Activated CD8-positive, alpha-beta memory T cell treated with anti-CD3 and anti-CD28 coated beads, Interleukin-2, amount 10 ng/mL, durations not matched to agents 7 days and 5 days (primary cell): ENCODE measurements at regions of chr10 and their contacts with region 1.

Region 1: GRCh38 chr10:79347226-79347893 is at the start of gene PPIF:
- DNase-seq: peak; percentile 95
- ATAC-seq: peak; percentile 90
- H3K4me3 Mint-ChIP-seq: peak within 1 kb of the TSS; percentile 85
- H3K27ac Mint-ChIP-seq: peak within 1 kb of the TSS; percentile 89
- H3K4me1 Mint-ChIP-seq: peaks cover 78% of the 10 kb centered on the region
- H3K27me3 Mint-ChIP-seq: no peaks in the 10 kb centered on the region
- total RNA-seq, gene PPIF: 119 to 144 TPM

Region 2: GRCh38 chr10:79223091-79224048 is 124.0 kb before region 1 on chr10:
- CTCF ChIA-PET with region 1: no interaction called
- DNase-seq: no peak
- ATAC-seq: no peak
- H3K4me3 Mint-ChIP-seq: no peak overlapping the region
- H3K27ac Mint-ChIP-seq: no peak overlapping the region
- H3K4me1 Mint-ChIP-seq: no peaks in the 10 kb centered on the region
- H3K27me3 Mint-ChIP-seq: no peaks in the 10 kb centered on the region

Region 3: DNA sequence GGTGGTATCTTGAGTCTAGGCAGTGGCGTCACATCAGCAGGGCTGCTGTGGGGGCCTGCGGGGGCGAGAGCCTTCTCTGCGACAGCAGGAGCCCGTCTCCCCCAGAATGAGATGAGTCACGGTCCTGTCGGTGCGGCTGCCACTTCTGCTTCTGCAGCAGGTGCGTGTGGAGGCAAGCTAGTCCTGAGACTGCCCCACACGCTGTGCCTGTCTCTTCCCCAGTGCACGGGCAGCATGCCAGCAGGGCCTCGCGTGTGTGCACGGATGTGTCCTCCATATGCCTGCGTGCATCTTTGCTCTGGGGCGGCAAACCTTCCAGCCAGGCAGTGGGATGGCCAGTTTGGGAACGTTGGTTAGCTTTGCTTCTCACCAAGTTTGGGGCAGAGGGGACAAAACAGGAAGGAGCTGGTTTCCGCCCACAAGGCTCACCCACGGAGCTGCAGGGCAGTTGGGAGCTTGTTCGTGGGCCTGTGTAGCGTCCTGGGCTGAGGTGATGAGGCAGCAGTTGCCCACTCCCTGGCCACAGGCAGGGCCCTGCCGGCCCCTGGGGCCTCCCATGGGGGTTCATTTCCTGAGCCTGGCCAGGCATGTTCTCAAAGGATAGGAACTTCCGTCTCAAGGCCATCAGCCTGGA is 60.9 kb before region 1 on chr10:
- CTCF ChIA-PET with region 1: interaction called, 18 read pairs
- DNase-seq: peak; percentile 96
- ATAC-seq: peak; percentile 89
- H3K4me3 Mint-ChIP-seq: peak overlapping the region; percentile 66
- H3K27ac Mint-ChIP-seq: peak overlapping the region; percentile 95
- H3K4me1 Mint-ChIP-seq: peaks cover 69% of the 10 kb centered on the region
- H3K27me3 Mint-ChIP-seq: no peaks in the 10 kb centered on the region

Region 4: GRCh38 chr10:79292891-79293746 is 54.2 kb before region 1 on chr10:
- CTCF ChIA-PET with region 1: interaction called, 18 read pairs
- DNase-seq: peak; percentile 55
- ATAC-seq: peak; percentile 63
- H3K4me3 Mint-ChIP-seq: no peak overlapping the region
- H3K27ac Mint-ChIP-seq: peak overlapping the region; percentile 20
- H3K4me1 Mint-ChIP-seq: peaks cover 47% of the 10 kb centered on the region
- H3K27me3 Mint-ChIP-seq: no peaks in the 10 kb centered on the region

Region 5: DNA sequence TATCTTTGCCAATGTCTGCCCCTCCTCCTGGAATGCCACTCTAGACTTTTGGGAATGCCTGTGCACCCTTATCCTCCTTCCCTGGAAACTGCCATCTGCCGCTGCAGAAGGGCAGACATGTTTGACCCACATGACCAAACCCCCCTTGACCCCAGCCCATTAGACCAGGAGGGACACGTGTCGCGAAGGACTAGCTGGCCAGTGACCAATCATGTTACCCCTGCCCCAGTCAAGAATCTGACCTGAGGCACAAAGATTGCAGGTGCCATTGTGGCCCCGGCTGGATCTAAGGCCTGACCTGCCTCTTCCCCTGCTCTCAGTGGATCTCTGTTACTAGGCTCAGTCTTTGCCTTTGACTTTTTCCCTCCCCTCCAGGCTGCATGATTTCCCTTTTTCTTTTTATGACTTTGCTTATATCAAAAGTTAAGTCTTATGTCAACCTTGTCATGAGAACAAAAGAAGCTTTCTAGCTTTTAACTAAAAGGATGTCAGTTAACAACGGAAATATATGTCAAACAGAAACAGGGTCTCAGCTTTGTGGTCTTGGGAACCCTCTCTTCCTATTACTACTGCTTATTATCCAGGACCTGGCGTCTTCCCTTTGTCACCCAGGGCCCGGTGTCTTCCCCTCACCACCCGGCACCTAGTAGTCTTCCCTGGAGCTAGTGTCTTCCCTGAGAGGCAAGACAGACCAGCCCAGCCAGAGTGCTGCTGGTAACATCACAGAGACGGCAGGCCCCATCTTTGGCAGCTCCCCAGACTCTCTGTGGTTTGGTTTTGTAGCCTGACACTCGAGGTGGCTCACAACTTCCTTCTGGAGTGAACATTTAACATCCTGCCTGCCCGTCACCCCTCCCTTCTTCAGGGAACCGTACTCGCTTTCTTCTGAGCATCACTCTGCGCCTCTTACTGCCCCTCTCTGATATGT is 24.5 kb before region 1 on chr10:
- CTCF ChIA-PET with region 1: interaction called, 171 read pairs
- DNase-seq: peak; percentile 91
- ATAC-seq: peak; percentile 81
- H3K4me3 Mint-ChIP-seq: peak overlapping the region; percentile 59
- H3K27ac Mint-ChIP-seq: peak overlapping the region; percentile 97
- H3K4me1 Mint-ChIP-seq: peaks cover 72% of the 10 kb centered on the region
- H3K27me3 Mint-ChIP-seq: no peaks in the 10 kb centered on the region

Region 6: GRCh38 chr10:79333478-79333877 is 13.9 kb before region 1 on chr10:
- CTCF ChIA-PET with region 1: interaction called, 11 read pairs
- DNase-seq: no peak
- ATAC-seq: no peak
- H3K4me3 Mint-ChIP-seq: no peak overlapping the region
- H3K27ac Mint-ChIP-seq: no peak overlapping the region
- H3K4me1 Mint-ChIP-seq: peaks cover 26% of the 10 kb centered on the region
- H3K27me3 Mint-ChIP-seq: no peaks in the 10 kb centered on the region

Region 7: DNA sequence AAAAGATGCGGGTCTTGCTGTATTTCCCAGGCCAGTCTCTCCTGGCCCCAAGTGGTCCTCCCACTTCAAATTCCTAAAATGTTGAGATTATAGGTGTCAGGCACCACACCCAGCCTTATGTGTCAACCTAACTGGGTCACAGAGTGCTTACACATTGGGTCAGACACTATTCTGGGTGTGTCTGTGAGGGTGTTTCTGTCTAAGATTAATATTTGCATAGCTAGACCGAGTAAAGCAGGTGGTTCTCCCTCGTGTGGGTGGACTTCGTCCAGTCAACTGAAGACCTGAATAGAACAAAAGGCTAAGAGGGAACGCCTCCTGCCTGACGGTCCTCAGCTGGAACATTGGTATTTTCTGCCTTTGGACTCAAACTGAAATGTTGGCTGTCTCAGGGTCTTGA is 11.4 kb after region 1 on chr10:
- CTCF ChIA-PET with region 1: interaction called, 15 read pairs
- DNase-seq: peak; percentile 31
- ATAC-seq: no peak
- H3K4me3 Mint-ChIP-seq: no peak overlapping the region
- H3K27ac Mint-ChIP-seq: no peak overlapping the region
- H3K4me1 Mint-ChIP-seq: peaks cover 45% of the 10 kb centered on the region
- H3K27me3 Mint-ChIP-seq: peaks cover 13% of the 10 kb centered on the region

Region 8: DNA sequence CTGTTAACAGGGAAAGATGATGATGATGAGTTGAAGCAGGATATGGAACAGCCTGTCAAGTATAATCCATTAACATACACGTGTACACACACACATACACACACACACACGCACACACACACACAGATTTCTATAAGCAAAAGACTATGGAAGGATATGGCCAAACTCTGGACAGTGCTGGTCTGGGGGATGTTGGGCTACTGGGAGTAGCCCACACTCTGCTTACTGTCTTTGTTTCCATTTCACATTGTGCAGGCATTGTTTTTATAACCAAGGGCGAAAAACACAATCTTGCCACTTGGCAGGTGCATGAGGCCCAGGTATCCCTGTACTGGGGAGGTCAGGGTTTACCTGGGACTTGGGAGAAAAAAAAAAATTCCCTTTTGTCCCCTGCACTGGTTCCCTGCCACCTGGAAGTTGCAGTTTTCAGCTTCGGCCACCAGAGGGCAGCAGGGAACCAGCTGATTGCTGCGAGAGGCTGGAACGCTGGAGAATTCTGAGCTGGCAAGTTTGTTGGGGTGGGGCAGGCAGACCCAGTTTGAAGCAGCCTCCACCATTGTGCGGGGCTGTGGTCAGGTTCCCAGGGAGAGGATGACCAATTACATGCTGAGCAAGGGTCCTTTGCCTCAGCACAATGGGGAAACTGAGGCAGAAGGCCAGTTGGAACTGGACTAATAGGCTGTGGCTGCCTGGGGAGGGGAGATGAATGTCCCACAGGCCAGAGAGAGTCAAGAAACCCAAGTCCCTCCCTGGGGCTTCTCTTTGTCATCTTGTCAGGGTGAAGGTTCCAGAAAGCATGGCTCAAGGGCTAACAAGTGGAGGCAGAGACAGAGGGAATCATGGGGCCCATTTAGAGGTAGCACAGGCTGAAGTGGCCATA is 27.2 kb after region 1 on chr10:
- CTCF ChIA-PET with region 1: interaction called, 14 read pairs
- DNase-seq: peak; percentile 80
- ATAC-seq: peak; percentile 77
- H3K4me3 Mint-ChIP-seq: no peak overlapping the region
- H3K27ac Mint-ChIP-seq: no peak overlapping the region
- H3K4me1 Mint-ChIP-seq: peaks cover 3% of the 10 kb centered on the region
- H3K27me3 Mint-ChIP-seq: peaks cover 21% of the 10 kb centered on the region